ENCODE measurements at regions of chr3 and their contacts with region 1.

Region 1: GRCh38 chr3:89859757-89860156 is 752.3 kb downstream of the EPHA3 start:
- DNase-seq: no peak
- ATAC-seq: no peak
- H3K4me3 ChIP-seq: no peak overlapping the region
- H3K27ac ChIP-seq: no peak overlapping the region
- H3K4me1 ChIP-seq: no peaks in the 10 kb centered on the region
- H3K27me3 ChIP-seq: peaks cover 6% of the 10 kb centered on the region; the same call in 1 of the 2 replicates
- CTCF ChIP-seq: no peak

Region 2: GRCh38 chr3:89795506-89795905 is 64.3 kb before region 1 on chr3:
- CTCF ChIA-PET with region 1: no interaction called
- POLR2A ChIA-PET with region 1: no interaction called
- intact Hi-C with region 1: loop called (anchors 2 kb)
- DNase-seq: no peak
- ATAC-seq: no peak
- H3K4me3 ChIP-seq: no peak overlapping the region
- H3K27ac ChIP-seq: no peak overlapping the region
- H3K4me1 ChIP-seq: peaks cover 3% of the 10 kb centered on the region; the same call in 1 of the 2 replicates
- H3K27me3 ChIP-seq: peaks cover 32% of the 10 kb centered on the region
- CTCF ChIP-seq: no peak